ENCODE measurements at regions of chr7 and their contacts with region 1.

Region 1: GRCh38 chr7:100271716-100272537 is 35.6 kb upstream of the SPDYE3 start:
- DNase-seq: peak; percentile 98
- H3K4me3 Mint-ChIP-seq: peak overlapping the region; percentile 71
- H3K27ac Mint-ChIP-seq: peak overlapping the region; percentile 38
- H3K4me1 Mint-ChIP-seq: peaks cover 8% of the 10 kb centered on the region
- H3K27me3 Mint-ChIP-seq: no peaks in the 10 kb centered on the region

Region 2: GRCh38 chr7:100167921-100168323 is 104.0 kb before region 1 on chr7:
- CTCF ChIA-PET with region 1: no interaction called
- POLR2A ChIA-PET with region 1: no interaction called
- intact Hi-C with region 1: no loop called
- DNase-seq: no peak
- H3K4me3 Mint-ChIP-seq: peak overlapping the region; percentile 72
- H3K27ac Mint-ChIP-seq: peak overlapping the region; percentile 35
- H3K4me1 Mint-ChIP-seq: peaks cover 73% of the 10 kb centered on the region
- H3K27me3 Mint-ChIP-seq: peaks cover 2% of the 10 kb centered on the region

Region 3: GRCh38 chr7:100190048-100190711 is 81.7 kb before region 1 on chr7:
- CTCF ChIA-PET with region 1: interaction called, 6 read pairs
- POLR2A ChIA-PET with region 1: no interaction called
- intact Hi-C with region 1: loop called (anchors 10 kb)
- DNase-seq: no peak
- H3K4me3 Mint-ChIP-seq: no peak overlapping the region
- H3K27ac Mint-ChIP-seq: no peak overlapping the region
- H3K4me1 Mint-ChIP-seq: peaks cover 18% of the 10 kb centered on the region
- H3K27me3 Mint-ChIP-seq: no peaks in the 10 kb centered on the region

Region 4: DNA sequence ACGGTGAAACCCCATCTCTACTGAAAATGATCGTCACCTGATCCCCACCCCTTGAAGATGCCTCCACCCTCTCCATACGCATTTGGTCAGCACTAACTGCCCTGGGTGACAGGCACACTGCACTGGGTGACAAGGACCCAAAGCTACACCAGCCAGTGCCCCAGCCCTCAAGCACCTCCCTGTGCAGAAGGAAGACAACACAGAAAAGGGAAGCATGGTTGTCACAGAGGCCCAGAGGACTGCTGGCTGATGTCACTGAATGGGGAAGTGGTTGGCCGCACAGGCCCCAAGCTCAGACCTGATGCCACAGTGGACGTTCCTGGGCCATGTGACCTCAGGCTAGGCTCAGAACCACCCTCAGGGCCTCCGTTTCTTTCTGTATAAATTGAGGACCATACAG is 97.2 kb after region 1 on chr7:
- CTCF ChIA-PET with region 1: no interaction called
- POLR2A ChIA-PET with region 1: no interaction called
- intact Hi-C with region 1: loop called (anchors 5 kb)
- DNase-seq: no peak
- H3K4me3 Mint-ChIP-seq: no peak overlapping the region
- H3K27ac Mint-ChIP-seq: no peak overlapping the region
- H3K4me1 Mint-ChIP-seq: peaks cover 37% of the 10 kb centered on the region
- H3K27me3 Mint-ChIP-seq: no peaks in the 10 kb centered on the region